ENCODE measurements at regions of chr6 and their contacts with region 1.

Region 1: GRCh38 chr6:336159-337019 is 44.1 kb downstream of the DUSP22 start:
- DNase-seq: peak; percentile 29
- H3K4me3 Mint-ChIP-seq: no peak overlapping the region
- H3K27ac Mint-ChIP-seq: peak overlapping the region; percentile 71
- H3K4me1 Mint-ChIP-seq: peaks cover 55% of the 10 kb centered on the region
- H3K27me3 Mint-ChIP-seq: no peaks in the 10 kb centered on the region

Region 2: GRCh38 chr6:319177-320131 is 16.9 kb before region 1 on chr6:
- CTCF ChIA-PET with region 1: interaction called, 3 read pairs
- POLR2A ChIA-PET with region 1: interaction called, 10 read pairs
- DNase-seq: no peak
- H3K4me3 Mint-ChIP-seq: no peak overlapping the region
- H3K27ac Mint-ChIP-seq: peak overlapping the region; percentile 51
- H3K4me1 Mint-ChIP-seq: peaks cover 23% of the 10 kb centered on the region
- H3K27me3 Mint-ChIP-seq: peaks cover 2% of the 10 kb centered on the region

Measured in activated CD4-positive, alpha-beta memory T cell treated with anti-CD3 and anti-CD28 coated beads, Interleukin-2, amount 10 ng/mL, durations not matched to agents 7 days and 5 days (primary cell).